Activated T-helper 1 cell treated with anti-CD3 and anti-CD28 coated beads, Interleukin-12 subunit alpha, Interleukin-12 subunit beta, Interleukin-2, Interleukin-4 antibody, amounts not matched to agents 30 ng/mL and 10 ng/mL and 1 ng/mL, durations not matched to agents 14 hours and 24 hours and 36 hours (primary cell): ENCODE measurements at regions of chr18 and their contacts with region 1.

Region 1: DNA sequence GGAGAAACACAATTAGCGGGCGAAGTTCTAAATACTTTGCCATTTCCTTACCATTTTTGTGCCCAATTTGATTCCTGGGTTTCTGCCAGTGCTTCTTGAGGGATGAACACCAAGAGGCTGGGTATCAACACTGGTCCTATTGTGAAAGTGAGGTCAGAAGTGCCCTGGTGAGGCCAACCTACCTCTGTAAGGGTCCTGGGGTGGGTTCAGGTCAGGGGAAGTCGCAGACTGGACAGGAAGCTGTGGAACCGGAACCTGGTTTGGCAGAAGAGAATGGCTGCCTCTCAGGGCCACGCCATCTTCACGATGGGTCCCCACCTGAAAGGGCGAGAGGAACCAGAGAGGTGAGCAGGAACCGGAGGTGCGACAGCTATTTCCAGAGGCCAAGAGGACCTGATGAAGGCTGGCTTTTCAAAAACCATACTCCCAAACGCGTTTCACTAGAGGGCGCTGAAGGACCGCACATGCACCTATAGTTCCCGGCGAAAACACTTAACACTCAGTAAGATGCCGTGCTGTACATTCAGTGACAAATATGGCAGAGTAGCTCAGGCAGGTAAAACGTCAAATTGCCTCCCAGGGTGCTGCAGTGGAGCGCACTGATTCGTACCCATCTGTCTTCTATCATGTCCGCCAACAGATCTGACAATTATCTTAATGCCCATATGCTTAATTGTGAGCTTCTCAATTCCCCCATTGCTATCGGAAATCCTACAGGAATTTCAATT is 275.3 kb upstream of the CCDC68 start:
- DNase-seq: peak; percentile 41
- H3K4me3 Mint-ChIP-seq: no peak overlapping the region
- H3K27ac Mint-ChIP-seq: no peak overlapping the region
- H3K4me1 Mint-ChIP-seq: peaks cover 5% of the 10 kb centered on the region
- H3K27me3 Mint-ChIP-seq: no peaks in the 10 kb centered on the region

Region 2: DNA sequence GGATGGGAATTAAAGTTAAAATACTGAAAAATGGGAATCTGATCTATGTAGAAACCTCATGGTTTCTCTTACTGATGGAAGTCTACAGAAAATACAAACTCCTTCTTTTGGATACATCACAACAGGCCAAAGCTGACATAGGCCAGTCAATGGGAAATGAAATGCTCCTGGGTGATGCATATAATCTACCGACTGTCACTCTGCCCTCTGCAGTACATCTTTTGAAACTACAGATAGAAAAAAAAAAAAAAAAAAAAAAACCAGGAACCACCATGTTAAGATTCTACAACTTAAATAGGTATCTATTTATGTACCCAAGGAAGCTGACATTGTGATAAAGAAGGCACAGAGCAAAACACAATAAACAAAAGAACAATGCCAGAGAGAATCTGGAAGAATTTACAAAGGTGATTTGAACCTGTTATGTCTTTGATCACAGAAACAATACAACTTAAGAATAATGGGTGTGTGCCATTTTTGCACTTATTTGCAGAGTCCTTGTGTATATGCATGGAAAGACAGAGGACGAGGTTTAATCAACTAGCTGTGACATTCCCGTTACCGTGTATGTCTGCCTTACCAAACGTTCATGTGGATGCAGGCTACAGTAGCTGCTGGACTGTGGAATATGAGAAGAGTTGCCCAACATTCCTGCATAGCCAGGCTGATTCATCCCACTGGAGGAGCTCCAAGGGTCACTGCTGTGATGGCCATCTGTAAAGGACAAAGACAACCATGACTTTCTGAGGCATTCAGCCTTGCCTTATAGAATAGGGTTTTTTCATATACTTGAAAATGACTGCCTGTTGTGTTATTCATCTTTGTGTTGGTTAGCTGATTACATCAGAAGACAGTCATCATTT is 40.7 kb after region 1 on chr18:
- intact Hi-C with region 1: loop called (anchors 1 kb)
- DNase-seq: no peak
- H3K4me3 Mint-ChIP-seq: no peak overlapping the region
- H3K27ac Mint-ChIP-seq: no peak overlapping the region
- H3K4me1 Mint-ChIP-seq: no peaks in the 10 kb centered on the region
- H3K27me3 Mint-ChIP-seq: no peaks in the 10 kb centered on the region